Lower leg skin (tissue), 4 donors: ENCODE measurements at regions of chr10 and their contacts with region 1.

Region 1: DNA sequence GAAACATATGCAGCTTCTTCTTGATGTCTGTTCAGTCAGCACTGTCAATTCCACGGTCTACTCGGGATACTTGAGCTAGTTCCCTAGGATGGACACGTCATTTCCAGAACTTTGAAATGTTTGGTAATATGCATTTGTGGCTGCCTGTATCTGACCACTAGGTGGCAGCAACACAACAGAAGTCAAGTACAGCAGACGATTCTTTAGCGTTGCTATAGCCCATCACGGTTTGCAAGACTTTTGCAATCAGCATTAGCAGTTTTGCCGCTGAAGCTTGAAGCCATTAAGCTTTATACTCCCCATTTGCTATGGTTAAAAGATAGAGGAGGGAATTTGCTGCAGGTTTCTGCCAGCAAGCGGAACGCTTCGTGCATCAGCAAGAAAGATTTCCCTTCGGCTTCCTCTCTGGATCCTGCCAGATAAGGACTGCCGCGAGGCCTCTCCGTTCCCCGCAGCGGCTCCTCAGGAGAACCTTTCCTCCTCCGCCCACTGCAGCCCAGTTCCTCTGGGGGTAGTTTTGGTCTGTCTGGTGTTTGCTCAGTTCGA is 63.5 kb downstream of the ABCC2 start:
- DNase-seq: peak; percentile 87 to 93
- H3K4me3 ChIP-seq: no peak overlapping the region
- CTCF ChIP-seq: peak in 1 of 3 donors; percentile 53
- POLR2A ChIP-seq: no peak

Region 2: DNA sequence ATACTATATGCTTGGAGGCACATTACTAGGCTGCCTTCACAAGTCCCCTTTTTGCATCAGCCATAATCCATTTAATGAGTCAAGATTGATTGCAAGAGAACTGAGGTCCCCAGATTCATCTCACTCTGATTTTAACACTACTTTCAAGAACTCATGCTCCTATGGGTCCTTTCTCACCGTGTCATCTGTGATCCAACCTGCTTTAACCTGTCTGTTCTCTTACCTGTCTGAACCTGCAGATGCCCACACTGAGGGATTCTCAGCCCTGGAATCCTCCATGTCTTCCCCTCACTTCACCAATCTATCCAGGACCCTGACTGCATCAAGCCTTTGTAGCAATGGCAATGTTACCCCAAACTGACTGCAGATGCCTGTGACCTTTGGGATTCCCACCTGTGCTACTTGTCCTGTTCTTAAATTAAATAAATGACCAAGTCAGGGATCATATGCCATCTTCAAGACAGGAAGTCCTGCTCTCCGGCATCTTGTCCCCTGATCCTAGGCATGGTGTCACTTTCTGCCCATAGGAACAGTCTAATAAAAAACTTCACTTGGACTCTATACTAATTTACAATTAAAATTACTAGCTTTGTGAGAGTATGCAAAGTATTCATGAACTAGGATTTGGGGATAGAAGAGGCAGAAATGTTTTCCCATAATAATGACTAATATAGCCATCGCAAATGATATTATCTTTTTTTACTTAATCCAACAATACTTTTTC is 389.5 kb before region 1 on chr10:
- intact Hi-C with region 1: no loop called
- DNase-seq: no peak
- H3K4me3 ChIP-seq: no peak overlapping the region
- CTCF ChIP-seq: no peak
- POLR2A ChIP-seq: no peak

Region 3: DNA sequence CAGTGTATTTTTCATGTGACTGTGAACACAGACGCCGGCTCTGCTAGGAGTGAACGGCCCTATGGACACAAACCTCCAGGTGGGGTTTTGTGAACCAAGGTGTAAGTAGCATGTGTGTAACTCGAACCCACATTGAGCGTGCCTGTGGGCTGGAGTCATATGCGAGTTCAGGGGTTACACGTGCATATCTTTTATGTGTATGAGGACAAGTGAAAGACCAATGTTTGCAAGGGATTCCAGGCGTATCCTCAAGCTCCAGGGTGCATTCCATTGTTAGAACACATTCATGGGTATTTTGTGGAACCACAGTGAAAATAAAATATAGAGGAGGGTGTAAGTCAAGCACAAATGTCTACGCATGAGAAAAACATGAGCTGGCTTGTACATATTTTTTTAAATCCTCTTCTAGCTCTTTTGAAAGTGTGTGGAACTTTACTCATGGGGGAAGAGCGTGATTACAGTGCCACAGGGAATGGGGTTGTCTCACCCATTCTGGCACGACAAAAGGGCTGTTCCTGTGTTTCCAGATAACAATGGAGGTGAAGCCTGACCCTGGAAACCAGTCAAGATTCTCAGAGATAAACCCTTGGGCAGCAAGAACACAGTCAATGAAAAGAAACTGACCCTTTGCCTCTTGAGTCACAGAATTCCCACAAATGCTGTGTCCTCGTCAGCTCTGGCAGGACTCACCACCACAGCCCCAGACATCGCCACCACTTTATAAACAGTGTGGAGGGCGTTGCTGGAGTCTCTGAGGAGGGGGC is 378.5 kb before region 1 on chr10:
- intact Hi-C with region 1: no loop called
- DNase-seq: no peak
- H3K4me3 ChIP-seq: no peak overlapping the region
- CTCF ChIP-seq: no peak
- POLR2A ChIP-seq: no peak

Region 4: GRCh38 chr10:100046021-100046486 is 200.1 kb after region 1 on chr10:
- intact Hi-C with region 1: loop called (anchors 5 kb)
- DNase-seq: peak; percentile 84 to 97
- H3K4me3 ChIP-seq: no peak overlapping the region
- CTCF ChIP-seq: peak in 1 of 3 donors; percentile 80
- POLR2A ChIP-seq: no peak